ENCODE measurements at regions of chr14 and their contacts with region 1.

Region 1: DNA sequence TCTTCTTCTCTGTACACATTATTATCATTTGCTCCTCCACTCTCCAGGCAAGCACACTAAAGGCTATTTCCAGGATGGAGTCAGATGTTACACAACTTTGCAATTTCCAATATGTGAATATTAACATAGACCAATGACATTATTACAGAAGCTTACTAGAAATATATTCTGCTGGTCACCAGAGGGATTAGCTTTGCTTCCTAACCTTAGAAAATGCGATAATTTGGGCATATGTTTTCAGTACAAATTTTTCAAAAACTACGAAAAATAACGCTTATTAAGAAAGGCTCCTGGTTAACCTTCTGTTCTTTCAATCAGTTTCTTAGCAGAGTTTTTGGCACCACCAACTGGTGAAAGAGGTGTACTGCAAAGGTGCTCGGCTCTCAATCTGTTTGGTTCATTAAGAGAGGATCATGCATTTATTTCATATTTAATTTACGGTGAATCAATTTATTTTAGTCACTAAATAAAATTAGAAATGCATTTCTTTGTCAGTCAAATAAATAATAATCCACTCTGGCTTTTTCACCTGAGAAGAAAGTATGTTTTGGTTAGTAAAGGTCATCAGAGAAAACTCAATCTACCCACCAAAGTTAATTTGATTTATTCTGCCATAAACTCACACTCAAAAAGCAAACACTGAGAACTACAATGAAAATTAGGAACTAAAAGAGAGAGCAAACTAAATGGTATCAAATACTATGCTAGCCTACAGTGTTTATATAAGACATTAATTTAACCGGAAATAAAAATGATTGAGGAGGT is 39.2 kb downstream of the EFCAB11 start:
- DNase-seq: peak; percentile 47 to 76 (median 57)
- H3K4me3 ChIP-seq: no peak overlapping the region
- H3K4me3 Mint-ChIP-seq: no peak overlapping the region
- H3K27ac ChIP-seq: no peak overlapping the region
- H3K27ac Mint-ChIP-seq: peak overlapping the region in 1 of 7 donors; percentile 44
- H3K4me1 ChIP-seq: peaks cover 5 to 15% of the 10 kb centered on the region in 2 donors
- H3K4me1 Mint-ChIP-seq: peaks cover 12% of the 10 kb centered on the region
- H3K27me3 ChIP-seq: no peaks in the 10 kb centered on the region
- H3K27me3 Mint-ChIP-seq: peaks cover 2 to 5% (median 2%) of the 10 kb centered on the region in 3 donors
- CTCF ChIP-seq: peak; percentile 94

Region 2: DNA sequence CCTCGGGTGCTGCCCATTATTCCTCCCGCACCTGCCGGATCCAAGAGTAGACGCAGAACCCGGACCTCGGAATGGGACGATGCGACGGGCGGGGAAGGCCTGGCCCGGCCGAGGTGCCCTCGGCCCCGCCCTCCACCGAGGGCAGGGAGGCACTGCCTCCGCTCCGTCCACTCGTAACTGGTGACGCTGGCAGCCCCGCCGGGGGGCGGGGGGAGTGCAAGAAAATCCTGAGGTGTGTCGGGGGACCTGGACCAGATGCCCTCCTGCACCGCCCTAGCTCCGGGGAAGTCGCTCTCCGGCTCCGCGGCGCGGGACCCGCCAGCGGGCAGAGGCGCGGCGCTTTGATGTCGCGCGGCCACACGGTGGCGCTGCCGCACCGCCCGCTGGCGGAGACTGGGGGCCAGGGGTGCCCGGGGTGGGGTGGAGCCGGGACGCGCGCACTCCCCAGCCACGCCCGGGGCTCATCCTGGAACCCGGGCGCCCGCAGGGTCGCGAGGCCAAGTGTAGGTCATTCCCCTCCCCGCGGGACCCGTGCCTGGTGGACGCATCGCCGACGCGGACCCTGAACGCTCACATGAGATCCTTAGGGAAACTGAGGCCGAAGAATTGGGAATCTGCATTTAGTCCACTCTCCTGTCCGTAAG is 888.1 kb before region 1 on chr14:
- intact Hi-C with region 1: loop called (anchors 10 kb)
- DNase-seq: peak; percentile 25 to 53 (median 53)
- H3K4me3 ChIP-seq: peak overlapping the region; percentile 37 to 78 (median 46)
- H3K4me3 Mint-ChIP-seq: peak overlapping the region; percentile 78 to 86
- H3K27ac ChIP-seq: no peak overlapping the region
- H3K27ac Mint-ChIP-seq: peak overlapping the region in 2 of 7 donors; percentile 21 to 72
- H3K4me1 ChIP-seq: peaks cover 34 to 37% of the 10 kb centered on the region in 2 donors
- H3K4me1 Mint-ChIP-seq: peaks cover 28% of the 10 kb centered on the region
- H3K27me3 ChIP-seq: peaks cover 22 to 35% of the 10 kb centered on the region in 2 donors
- H3K27me3 Mint-ChIP-seq: peaks cover 29 to 43% (median 34%) of the 10 kb centered on the region in 3 donors
- CTCF ChIP-seq: peak; percentile 93